Heart right ventricle (tissue), 16 donors: ENCODE measurements at regions of chr3 and their contacts with region 1.

Region 1: DNA sequence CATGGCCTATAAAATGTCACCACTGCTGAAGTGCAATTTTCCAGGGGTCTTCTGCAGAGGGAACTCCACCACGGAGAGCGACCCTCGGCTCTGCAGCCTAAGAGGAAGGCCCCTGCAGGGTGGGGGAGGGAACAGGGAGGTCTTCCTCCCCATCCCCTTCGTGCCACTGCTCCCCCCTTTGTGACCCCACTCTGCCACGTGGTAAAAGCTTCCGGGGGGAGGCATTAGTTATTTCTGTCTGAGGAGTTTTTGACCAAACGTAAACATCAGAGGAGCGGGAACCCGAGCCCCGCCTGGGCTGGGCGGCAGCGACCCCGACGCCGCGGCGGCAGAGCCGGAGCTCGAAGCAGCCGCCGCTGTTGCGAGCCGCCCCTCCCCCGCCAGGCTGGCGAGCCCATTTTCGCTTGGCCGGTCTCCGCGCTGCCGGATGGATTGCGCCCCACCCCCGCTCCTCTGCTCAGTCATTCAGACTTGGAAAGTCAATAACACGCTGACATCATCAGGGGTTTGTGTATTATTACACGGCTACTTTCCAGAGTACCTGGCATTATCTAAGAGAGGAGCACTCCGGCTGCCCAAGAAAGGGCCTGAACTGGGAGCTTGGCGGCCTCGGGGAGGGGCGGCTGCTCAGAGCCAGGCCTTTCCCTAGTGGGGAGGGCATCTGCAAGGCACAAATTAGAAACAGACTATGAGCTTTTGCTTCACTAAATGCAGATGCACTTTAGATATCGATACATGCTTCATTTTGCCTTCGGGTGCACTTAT is 162.5 kb upstream of the TBL1XR1 start:
- DNase-seq: peak; percentile 96
- ATAC-seq: peak; percentile 89 to 95 (median 93)
- H3K4me3 ChIP-seq: peak overlapping the region in 8 of 10 donors; percentile 14 to 51 (median 46)
- H3K27ac ChIP-seq: peak overlapping the region; percentile 64 to 97 (median 91)
- H3K4me1 ChIP-seq: peaks cover 34 to 77% (median 59%) of the 10 kb centered on the region in 9 donors
- H3K27me3 ChIP-seq: no peaks in the 10 kb centered on the region
- CTCF ChIP-seq: peak in 2 of 9 donors; percentile 19 to 31

Region 2: GRCh38 chr3:177041021-177041729 is 318.6 kb before region 1 on chr3:
- intact Hi-C with region 1: loop called in 1 of 10 experiments (anchors 10 kb)
- DNase-seq: peak in 1 of 2 donors; percentile 30
- ATAC-seq: peak; percentile 78 to 94 (median 88)
- H3K4me3 ChIP-seq: no peak overlapping the region
- H3K27ac ChIP-seq: peak overlapping the region in 8 of 10 donors; percentile 26 to 72 (median 52)
- H3K4me1 ChIP-seq: peaks cover 5 to 46% (median 29%) of the 10 kb centered on the region in 9 donors
- H3K27me3 ChIP-seq: no peaks in the 10 kb centered on the region
- CTCF ChIP-seq: no peak

Region 3: DNA sequence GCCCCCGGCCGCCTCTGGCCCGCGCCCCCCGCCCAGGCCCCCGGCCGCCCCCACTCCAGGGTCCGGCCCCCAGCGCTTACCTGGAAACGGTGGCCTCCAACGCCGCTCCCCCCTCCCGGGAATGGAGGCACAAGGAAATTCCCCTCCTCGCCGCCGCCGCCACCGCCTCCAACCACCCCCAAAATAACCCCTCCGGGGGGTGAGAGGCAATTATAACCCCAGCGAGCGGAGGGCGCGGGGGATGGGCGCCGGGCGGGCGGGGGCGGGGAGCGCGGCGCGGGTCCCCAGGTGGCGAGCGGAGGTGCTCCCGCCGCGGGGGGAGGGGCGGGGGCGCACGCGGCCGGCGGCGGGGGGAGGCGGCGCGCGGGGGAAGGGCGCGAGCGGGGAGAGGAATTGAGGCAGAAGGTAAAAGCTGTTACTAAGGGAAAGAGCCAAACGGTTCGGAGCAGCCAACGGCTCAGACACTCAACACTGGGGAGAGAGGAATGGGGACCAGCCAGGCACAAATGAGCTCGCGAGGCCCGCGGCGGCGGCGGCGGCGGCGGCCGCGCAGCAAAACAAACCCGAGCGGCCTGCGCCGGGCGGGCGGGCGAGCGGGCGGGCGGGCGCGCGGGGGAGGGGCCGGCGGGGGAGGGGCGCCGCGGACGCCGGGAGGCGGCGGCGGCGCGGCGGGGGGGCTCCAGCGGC is 162.6 kb before region 1 on chr3 and contains the start of gene TBL1XR1:
- intact Hi-C with region 1: loop called (anchors 1 to 5 kb)
- DNase-seq: peak; percentile 90 to 94
- ATAC-seq: peak; percentile 79 to 91 (median 88)
- H3K4me3 ChIP-seq: peak within 1 kb of the TSS; percentile 64 to 92 (median 84)
- H3K27ac ChIP-seq: peak within 1 kb of the TSS; percentile 96 to 99 (median 98)
- H3K4me1 ChIP-seq: peaks cover 0 to 65% (median 25%) of the 10 kb centered on the region in 9 donors
- H3K27me3 ChIP-seq: no peaks in the 10 kb centered on the region
- CTCF ChIP-seq: no peak
- total RNA-seq, gene TBL1XR1: 79.6 to 184 (median 129) TPM

Region 4: DNA sequence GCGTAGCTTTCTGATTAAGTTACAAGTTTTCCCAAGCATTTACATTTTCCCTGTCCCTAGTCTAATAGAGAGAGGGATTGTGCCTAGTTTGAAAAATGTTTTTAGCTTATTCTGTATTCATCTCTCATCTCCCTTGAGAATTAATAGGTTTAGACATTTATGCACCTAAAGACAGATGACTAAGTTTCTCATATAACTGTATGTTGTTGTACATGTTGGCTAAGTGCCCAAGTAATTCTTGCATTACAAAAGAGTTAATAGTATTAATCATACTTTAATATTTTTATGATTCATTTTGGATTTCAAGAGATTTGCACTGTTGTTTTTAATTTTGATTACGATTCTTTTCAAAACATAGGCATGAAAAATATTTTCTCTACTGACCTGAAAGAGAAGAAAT is 53.5 kb before region 1 on chr3:
- intact Hi-C with region 1: no loop called
- DNase-seq: no peak
- ATAC-seq: no peak
- H3K4me3 ChIP-seq: no peak overlapping the region
- H3K27ac ChIP-seq: no peak overlapping the region
- H3K4me1 ChIP-seq: no peaks in the 10 kb centered on the region
- H3K27me3 ChIP-seq: no peaks in the 10 kb centered on the region
- CTCF ChIP-seq: no peak

Region 5: GRCh38 chr3:177448987-177449975 is 89.5 kb after region 1 on chr3:
- intact Hi-C with region 1: loop called in 2 of 10 experiments (anchors 5 to 10 kb)
- DNase-seq: no peak
- ATAC-seq: peak in 1 of 8 donors; percentile 21
- H3K4me3 ChIP-seq: no peak overlapping the region
- H3K27ac ChIP-seq: peak overlapping the region in 1 of 10 donors; percentile 66
- H3K4me1 ChIP-seq: peaks cover 0 to 52% (median 16%) of the 10 kb centered on the region in 9 donors
- H3K27me3 ChIP-seq: no peaks in the 10 kb centered on the region
- CTCF ChIP-seq: no peak

Region 6: DNA sequence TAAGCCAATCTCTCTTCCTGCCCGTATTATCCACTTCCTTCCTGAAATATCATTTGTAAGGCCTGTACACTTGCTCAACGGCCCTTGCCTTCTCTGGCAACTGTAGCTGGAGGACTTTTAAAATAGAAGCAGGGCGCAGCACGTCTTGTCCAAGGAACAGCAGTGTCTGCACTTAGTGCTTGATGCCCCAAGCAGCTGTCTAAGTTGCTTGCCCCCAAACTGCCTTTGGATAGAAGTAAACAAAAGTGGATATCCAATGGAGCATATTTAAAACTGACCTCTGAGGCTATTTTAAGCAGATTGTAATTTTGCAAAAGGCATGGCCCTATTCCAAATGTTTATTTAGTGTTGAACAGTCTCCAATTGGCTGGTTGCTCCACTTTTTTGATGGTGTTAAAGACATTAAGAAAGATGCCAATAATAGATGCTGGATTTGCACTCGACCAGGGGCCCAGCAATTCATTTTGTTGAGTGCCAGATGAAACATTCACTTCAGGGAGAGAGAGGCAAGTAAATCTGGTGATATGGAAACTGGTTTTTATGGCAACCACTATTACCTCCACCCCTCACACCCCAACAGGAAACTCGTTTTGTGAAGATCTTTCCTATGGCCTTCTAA is 364.4 kb after region 1 on chr3:
- intact Hi-C with region 1: loop called in 2 of 10 experiments (anchors 5 kb)
- DNase-seq: peak; percentile 46 to 71
- ATAC-seq: peak; percentile 84 to 98 (median 94)
- H3K4me3 ChIP-seq: no peak overlapping the region
- H3K27ac ChIP-seq: peak overlapping the region; percentile 42 to 79 (median 64)
- H3K4me1 ChIP-seq: peaks cover 2 to 54% (median 40%) of the 10 kb centered on the region in 9 donors
- H3K27me3 ChIP-seq: no peaks in the 10 kb centered on the region
- CTCF ChIP-seq: no peak

Region 7: DNA sequence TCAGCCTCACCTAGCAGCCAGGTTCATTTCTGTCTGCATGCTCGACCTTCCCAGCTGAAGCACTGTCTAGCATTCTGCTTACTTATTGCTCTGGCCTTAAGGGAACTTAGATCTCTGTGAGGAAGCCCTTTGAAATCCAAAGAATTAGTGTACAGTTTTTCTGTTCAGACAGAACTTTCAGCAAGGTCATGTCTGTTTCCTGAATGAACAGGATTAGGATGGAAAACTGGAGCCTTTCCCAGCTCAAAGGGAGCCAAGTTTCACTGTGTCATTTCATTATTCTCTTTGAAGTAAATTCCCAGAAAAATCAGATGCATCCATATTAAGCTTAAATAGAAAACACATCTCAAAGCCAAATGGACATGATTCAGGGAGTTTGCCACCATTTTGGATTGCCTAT is 719.2 kb after region 1 on chr3:
- intact Hi-C with region 1: loop called in 1 of 10 experiments (anchors 10 kb)
- DNase-seq: peak in 1 of 2 donors; percentile 82
- ATAC-seq: peak; percentile 62 to 92 (median 80)
- H3K4me3 ChIP-seq: no peak overlapping the region
- H3K27ac ChIP-seq: peak overlapping the region in 7 of 10 donors; percentile 30 to 63 (median 49)
- H3K4me1 ChIP-seq: peaks cover 2 to 41% (median 31%) of the 10 kb centered on the region in 9 donors
- H3K27me3 ChIP-seq: no peaks in the 10 kb centered on the region
- CTCF ChIP-seq: no peak